Activated CD4-positive, alpha-beta T cell treated with anti-CD3 and anti-CD28 coated beads, Interleukin-2, amount 10 ng/mL, durations not matched to agents 24 days and 14 days (primary cell): ENCODE measurements at regions of chr21 and their contacts with region 1.

Region 1: GRCh38 chr21:25457411-25457810 is 149.9 kb downstream of the MRPL39 start:
- DNase-seq: peak; percentile 67
- H3K4me3 Mint-ChIP-seq: peak overlapping the region; percentile 60
- H3K27ac Mint-ChIP-seq: peak overlapping the region; percentile 79
- H3K4me1 Mint-ChIP-seq: peaks cover 50% of the 10 kb centered on the region
- H3K27me3 Mint-ChIP-seq: no peaks in the 10 kb centered on the region

Region 2: DNA sequence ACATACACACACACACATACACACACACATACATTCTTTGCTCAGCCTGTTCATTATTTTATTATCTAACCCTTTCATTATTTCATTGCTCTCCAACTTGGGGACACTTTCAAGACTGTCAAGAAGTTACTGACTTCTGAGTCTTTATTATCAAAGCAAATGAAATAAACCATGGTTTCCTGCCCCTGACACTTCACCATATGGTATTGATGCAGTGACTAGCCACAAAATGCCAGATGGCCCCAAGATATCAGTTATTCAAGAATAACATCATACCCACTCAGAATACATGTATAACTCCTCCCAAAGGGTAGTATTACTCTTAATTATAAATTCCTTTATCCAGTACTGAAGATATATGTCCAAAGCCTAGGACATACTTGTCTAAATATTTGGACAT is 47.4 kb before region 1 on chr21:
- intact Hi-C with region 1: no loop called
- DNase-seq: no peak
- H3K4me3 Mint-ChIP-seq: no peak overlapping the region
- H3K27ac Mint-ChIP-seq: no peak overlapping the region
- H3K4me1 Mint-ChIP-seq: peaks cover 1% of the 10 kb centered on the region
- H3K27me3 Mint-ChIP-seq: no peaks in the 10 kb centered on the region

Region 3: DNA sequence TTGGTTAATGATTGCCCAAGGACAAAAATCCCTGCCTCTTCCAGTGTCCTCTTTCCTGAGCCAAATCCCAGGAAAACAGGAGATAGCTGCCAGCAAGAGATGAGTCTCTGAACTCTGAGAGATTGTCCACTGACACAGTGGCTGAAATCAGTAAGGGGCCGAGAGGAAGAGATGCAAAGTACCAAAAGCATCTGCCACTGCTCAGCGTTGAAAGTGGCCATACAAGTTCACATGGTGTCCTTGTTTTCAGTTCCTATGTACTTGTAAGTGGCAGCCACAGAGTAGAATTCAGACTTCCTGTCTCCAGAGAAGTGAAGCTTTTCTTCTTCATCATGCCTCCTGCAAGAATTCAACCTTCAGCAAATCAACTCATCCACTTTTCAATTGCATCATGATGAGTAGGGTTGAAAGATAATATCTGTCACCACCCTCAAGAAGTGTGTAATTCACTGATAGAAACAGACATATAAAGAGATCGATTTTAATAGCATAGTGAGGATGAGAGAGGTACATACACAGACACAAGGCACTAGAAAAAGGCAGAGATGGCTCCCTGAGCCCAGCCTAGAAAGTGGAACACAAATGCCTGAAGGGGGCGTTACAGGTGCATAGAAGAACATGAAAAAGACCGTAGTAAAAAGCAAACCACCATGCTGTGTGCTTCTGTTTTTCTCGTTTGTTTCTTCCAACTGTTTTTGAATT is 35.9 kb before region 1 on chr21:
- intact Hi-C with region 1: loop called (anchors 1 kb)
- DNase-seq: peak; percentile 89
- H3K4me3 Mint-ChIP-seq: peak overlapping the region; percentile 70
- H3K27ac Mint-ChIP-seq: peak overlapping the region; percentile 93
- H3K4me1 Mint-ChIP-seq: peaks cover 39% of the 10 kb centered on the region
- H3K27me3 Mint-ChIP-seq: no peaks in the 10 kb centered on the region

Region 4: DNA sequence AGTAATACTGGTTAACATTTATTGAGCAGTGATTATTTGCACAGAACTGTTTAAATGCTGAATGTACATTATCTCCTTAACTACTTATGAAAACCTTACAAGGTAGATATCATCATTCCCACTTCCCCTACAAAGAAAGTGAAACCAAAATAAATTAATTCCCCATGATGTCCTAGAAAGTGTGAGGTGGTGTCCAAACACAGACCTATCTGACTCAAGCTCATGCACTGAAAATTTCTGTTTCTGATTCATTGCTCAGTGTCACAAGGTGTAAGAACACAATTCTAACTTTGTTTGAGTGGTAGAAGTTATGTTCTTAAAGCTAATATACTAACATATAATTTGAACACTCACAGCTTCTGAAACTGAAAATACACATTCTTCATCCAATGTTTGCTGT is 28.9 kb before region 1 on chr21:
- intact Hi-C with region 1: loop called (anchors 1 kb)
- DNase-seq: no peak
- H3K4me3 Mint-ChIP-seq: peak overlapping the region; percentile 42
- H3K27ac Mint-ChIP-seq: peak overlapping the region; percentile 57
- H3K4me1 Mint-ChIP-seq: peaks cover 36% of the 10 kb centered on the region
- H3K27me3 Mint-ChIP-seq: no peaks in the 10 kb centered on the region

Region 5: GRCh38 chr21:25501996-25502665 is 44.7 kb after region 1 on chr21:
- intact Hi-C with region 1: loop called (anchors 1 kb)
- DNase-seq: peak; percentile 67
- H3K4me3 Mint-ChIP-seq: peak overlapping the region; percentile 52
- H3K27ac Mint-ChIP-seq: peak overlapping the region; percentile 96
- H3K4me1 Mint-ChIP-seq: peaks cover 39% of the 10 kb centered on the region
- H3K27me3 Mint-ChIP-seq: no peaks in the 10 kb centered on the region

Region 6: GRCh38 chr21:25509862-25510261 is 52.5 kb after region 1 on chr21:
- intact Hi-C with region 1: loop called (anchors 1 kb)
- DNase-seq: no peak
- H3K4me3 Mint-ChIP-seq: peak overlapping the region; percentile 39
- H3K27ac Mint-ChIP-seq: peak overlapping the region; percentile 81
- H3K4me1 Mint-ChIP-seq: peaks cover 46% of the 10 kb centered on the region
- H3K27me3 Mint-ChIP-seq: no peaks in the 10 kb centered on the region